ENCODE measurements at regions of chr7 and their contacts with region 1.

Region 1: DNA sequence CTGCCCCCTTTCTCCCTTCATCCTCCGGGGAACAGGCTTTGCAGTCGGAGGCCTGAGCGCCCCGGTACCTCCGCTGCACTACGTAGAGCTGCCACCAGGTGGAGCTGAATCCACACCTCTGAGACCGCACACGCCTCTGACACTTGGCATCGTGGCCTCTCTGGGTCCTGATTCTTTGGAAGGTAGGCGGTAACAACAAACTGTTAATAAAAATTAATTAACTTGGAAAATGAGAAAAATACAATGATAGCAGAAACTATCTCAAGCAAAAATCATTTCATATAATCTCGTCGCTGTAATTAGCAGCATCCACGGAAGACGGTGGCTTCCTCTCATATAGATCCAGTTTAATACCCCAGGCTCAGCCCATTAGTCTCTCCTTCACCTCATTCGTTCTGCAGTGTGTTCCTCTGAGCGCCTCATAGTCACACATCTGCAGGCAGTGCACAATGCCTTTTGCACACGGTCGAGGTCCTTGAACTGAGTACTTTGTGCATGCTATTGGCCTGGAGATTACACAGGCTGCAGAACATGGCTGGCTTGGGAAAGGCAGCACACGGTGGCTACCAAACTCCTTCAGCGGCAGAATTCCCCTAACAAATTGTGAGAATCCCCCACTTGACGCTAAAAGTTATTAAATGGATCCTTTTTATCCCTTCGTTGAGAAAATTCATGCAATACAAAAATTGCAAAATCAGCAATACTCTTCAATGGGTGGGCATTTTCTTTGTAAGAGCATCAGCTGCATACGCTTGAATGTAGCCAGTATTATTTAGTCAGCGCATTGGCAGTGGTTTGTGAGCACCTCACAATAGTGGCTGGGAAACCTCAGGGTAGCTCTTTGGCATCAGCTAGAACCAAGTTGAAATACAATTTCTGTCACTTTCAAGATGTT is 18.7 kb downstream of the OR9A2 start:
- DNase-seq: peak; percentile 62
- H3K4me3 ChIP-seq: no peak overlapping the region
- H3K27ac ChIP-seq: no peak overlapping the region
- H3K4me1 ChIP-seq: peaks cover under 1% of the 10 kb centered on the region
- H3K27me3 ChIP-seq: peaks cover 15 to 18% of the 10 kb centered on the region in 2 experiments
- CTCF ChIP-seq: peak; percentile 88 to 91
- POLR2A ChIP-seq: no peak

Region 2: DNA sequence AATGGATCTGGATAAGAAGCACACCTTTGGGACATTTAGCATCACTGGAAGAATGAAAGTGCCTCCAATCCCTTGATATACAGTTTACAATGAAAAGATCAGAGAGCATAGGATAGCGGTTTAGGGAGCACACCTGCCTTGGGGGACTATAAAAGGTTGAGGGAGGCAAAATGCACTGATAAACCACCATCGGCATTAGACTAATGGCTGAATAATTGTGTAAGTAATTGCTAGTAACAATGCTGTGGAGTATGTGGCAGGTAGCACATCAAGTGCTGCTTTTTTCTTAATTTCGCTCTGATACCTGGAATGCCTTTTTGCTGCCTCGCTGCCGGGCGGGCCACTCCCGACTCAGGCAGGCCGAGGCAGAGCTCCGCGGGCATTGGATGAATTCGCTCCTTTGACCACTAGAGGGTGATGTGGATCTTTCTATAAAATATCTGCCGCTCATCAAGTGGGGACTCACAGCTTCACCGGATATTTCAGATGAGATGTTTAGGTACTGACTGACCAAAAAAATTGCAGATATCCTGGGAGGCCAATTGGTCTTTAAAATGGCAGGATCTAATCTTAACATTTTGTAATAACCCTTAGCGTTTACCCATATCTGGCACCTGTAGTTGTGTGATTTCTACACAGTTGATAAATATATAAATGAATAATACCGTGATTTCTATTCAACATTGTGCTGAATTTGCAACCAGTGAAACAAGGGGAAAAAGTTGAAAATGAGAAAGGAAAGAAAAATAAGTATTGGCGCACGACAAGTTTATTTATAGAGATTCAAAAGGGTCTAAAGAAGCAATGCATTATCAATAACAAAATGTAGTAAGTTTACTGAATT is 375.7 kb before region 1 on chr7:
- CTCF ChIA-PET with region 1: interaction called, 68 read pairs
- POLR2A ChIA-PET with region 1: no interaction called
- dilution Hi-C with region 1: no loop called
- intact Hi-C with region 1: loop called (anchors 1 kb)
- DNase-seq: peak; percentile 74
- H3K4me3 ChIP-seq: no peak overlapping the region
- H3K27ac ChIP-seq: no peak overlapping the region
- H3K4me1 ChIP-seq: no peaks in the 10 kb centered on the region
- H3K27me3 ChIP-seq: peaks cover 1 to 3% of the 10 kb centered on the region in 2 experiments
- CTCF ChIP-seq: peak; percentile 69 to 73
- POLR2A ChIP-seq: no peak

Region 3: DNA sequence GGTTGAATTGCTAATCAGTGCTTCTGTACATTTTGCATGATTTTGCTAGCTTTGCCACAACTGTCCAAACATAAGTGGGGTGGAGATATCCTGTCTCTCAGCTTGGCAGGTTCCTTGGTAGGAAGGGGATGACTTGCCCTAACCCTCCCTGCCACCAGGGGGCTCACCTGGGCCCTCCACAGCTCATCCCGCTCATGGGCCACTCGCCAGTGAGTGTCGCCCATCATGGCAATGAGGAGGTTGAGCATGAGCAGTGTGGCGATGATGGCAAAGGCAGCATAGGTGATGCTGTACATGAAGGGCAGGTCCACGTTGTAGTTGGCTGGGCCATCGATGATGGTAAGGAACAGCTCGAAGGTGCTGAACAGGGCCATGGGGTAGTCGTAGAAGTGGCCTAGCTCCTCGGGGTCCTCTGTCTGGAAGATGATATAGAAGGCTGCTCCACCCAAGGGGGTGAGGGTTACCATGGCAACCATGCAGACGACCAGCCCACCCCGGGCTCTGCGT is 134.9 kb before region 1 on chr7:
- CTCF ChIA-PET with region 1: interaction called, 27 read pairs
- POLR2A ChIA-PET with region 1: no interaction called
- dilution Hi-C with region 1: no loop called
- intact Hi-C with region 1: no loop called
- DNase-seq: no peak
- H3K4me3 ChIP-seq: no peak overlapping the region
- H3K27ac ChIP-seq: no peak overlapping the region
- H3K4me1 ChIP-seq: no peaks in the 10 kb centered on the region
- H3K27me3 ChIP-seq: peaks cover 0 to 2% of the 10 kb centered on the region in 2 experiments
- CTCF ChIP-seq: peak; percentile 35 to 48
- POLR2A ChIP-seq: no peak

Region 4: DNA sequence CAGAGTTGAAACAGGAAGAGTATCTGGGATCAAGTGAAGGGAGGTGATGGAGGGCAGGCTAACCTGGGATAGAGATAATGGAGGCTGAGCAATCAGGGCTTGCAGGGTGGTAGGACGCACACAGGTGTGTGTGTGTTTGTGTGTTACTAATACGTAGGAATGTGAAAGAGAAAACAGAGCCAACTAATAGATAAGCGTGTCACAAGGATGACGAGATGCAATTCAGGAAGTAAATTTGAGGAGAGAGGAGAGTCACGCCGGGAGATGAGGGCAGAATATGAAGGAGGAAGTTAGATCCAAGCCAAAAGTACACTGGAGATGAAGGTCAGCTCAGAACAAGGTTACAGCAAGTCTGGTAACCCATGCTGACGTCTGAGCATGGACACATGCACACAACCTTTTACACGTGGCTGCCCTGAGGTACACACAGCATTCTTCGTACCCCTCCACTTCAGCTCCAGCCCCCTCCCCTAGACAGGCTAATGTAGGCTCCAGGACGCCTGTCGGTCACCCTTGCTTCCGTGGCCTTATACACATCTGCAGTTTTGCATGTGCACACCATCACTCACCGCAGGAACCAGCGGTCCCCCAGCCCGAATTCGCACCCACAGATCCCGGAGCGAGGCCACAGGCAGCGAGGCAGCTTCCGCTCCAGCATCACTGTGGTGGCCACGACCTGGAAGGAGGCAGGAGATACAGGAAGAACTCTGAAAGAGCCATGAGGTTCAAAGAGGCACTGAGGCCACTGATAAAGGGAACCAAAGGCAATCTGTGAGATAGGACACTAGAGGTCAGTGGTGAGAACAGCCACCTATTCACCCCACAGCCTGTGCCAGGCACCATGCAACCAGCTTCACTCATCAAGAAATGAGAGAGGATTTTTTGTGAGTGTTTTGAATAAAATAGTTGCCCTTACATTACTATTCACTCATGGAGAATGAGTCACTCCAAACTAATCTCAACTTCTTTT is 99.0 kb before region 1 on chr7:
- CTCF ChIA-PET with region 1: interaction called, 11 read pairs
- POLR2A ChIA-PET with region 1: no interaction called
- dilution Hi-C with region 1: no loop called
- intact Hi-C with region 1: loop called (anchors 1 kb)
- DNase-seq: no peak
- H3K4me3 ChIP-seq: no peak overlapping the region
- H3K27ac ChIP-seq: no peak overlapping the region
- H3K4me1 ChIP-seq: no peaks in the 10 kb centered on the region
- H3K27me3 ChIP-seq: no peaks in the 10 kb centered on the region
- CTCF ChIP-seq: peak in 1 of 2 donors; percentile 26
- POLR2A ChIP-seq: no peak

Region 5: DNA sequence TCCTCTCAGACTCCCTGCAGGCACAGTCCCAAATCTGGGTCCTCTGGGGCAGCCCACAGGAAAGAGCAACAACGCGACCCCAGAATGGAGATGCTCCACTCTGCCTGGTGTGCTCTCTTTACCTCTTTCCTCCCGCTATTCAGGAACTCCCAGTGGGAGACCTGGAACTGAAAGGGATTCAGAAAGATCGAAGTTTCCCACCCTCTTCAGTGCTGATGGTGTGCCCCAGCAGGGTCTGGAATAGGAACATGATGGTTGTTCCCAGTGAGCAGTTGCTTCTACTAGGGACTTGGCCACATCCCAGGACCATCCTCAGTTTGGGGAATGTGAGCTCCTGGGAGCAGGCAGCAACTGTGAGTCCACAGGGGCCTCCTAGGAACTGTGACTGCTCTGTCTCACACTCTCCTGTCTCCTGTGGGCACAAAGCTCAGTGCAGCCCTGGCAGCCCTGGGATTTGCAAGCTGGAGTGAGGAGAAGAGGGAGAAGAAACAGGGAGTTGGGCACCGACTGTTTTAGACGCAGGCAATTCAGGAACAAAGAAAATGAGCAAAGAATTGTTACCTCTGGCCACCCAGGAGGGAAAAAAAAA is 61.8 kb after region 1 on chr7:
- CTCF ChIA-PET with region 1: no interaction called
- POLR2A ChIA-PET with region 1: no interaction called
- dilution Hi-C with region 1: no loop called
- intact Hi-C with region 1: no loop called
- DNase-seq: no peak
- H3K4me3 ChIP-seq: no peak overlapping the region
- H3K27ac ChIP-seq: no peak overlapping the region
- H3K4me1 ChIP-seq: no peaks in the 10 kb centered on the region
- H3K27me3 ChIP-seq: no peaks in the 10 kb centered on the region
- CTCF ChIP-seq: no peak
- POLR2A ChIP-seq: no peak

Region 6: DNA sequence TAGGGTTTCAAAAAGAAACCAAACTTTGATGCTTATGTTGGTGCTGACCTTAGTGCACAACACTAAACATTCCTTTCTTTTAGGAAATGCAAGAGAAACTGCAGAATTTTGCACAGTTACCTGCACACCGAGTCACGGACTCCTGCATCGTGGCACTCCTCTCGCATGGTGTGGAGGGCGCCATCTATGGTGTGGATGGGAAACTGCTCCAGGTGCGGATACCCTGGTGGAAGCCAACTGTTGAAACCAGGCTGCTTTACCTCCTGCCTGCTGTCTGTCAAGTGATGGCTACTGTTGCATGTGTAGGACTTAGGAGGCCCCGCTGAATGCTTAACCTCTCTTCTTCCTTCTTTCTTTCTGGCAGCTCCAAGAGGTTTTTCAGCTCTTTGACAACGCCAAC is 291.6 kb after region 1 on chr7:
- CTCF ChIA-PET with region 1: no interaction called
- POLR2A ChIA-PET with region 1: no interaction called
- dilution Hi-C with region 1: no loop called
- intact Hi-C with region 1: loop called (anchors 5 kb)
- DNase-seq: peak; percentile 29
- H3K4me3 ChIP-seq: no peak overlapping the region
- H3K27ac ChIP-seq: no peak overlapping the region
- H3K4me1 ChIP-seq: peaks cover 23% of the 10 kb centered on the region
- H3K27me3 ChIP-seq: no peaks in the 10 kb centered on the region
- CTCF ChIP-seq: peak; percentile 54 to 69
- POLR2A ChIP-seq: no peak